CD8-positive, alpha-beta memory T cell (primary cell): ENCODE measurements at regions of chr13 and their contacts with region 1.

Region 1: GRCh38 chr13:30676672-30677071 is 58.7 kb upstream of the ALOX5AP start:
- DNase-seq: no peak
- H3K4me3 ChIP-seq: no peak overlapping the region
- H3K4me3 Mint-ChIP-seq: no peak overlapping the region
- H3K27ac ChIP-seq: no peak overlapping the region
- H3K27ac Mint-ChIP-seq: peak overlapping the region in 2 of 8 donors; percentile 27 to 82
- H3K4me1 ChIP-seq: peaks cover 6% of the 10 kb centered on the region
- H3K4me1 Mint-ChIP-seq: peaks cover 22 to 32% (median 29%) of the 10 kb centered on the region in 3 donors
- H3K27me3 ChIP-seq: no peaks in the 10 kb centered on the region
- H3K27me3 Mint-ChIP-seq: peaks cover 0 to 6% of the 10 kb centered on the region in 2 donors

Region 2: DNA sequence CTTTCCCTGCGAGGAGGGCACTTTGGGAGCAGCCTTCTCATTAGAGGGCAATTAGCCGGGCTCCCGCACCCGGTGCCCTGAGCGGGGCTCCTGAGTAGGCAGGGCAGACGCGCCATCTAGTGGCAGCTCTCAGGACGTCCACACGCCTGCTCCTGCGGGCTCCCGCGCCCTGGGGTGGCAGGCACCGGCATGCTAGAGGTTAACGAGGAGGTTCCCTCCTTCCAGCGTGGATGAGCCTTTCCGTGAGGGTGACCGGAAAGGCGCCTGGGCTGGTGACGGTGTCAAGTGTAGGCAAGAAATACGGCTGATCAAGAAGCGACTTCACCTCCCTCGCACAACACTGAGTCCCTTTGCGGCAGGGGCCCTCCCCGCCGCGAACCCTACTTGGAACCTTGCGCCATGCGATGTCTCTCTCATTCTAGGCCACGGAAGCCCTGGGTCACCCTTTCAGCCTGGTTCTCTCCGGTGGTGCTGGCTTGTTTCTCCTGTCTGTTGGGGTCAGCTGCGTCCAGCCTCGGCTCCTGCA is 126.3 kb after region 1 on chr13:
- CTCF ChIA-PET with region 1: interaction called, 17 read pairs
- POLR2A ChIA-PET with region 1: no interaction called
- DNase-seq: peak; percentile 67 to 83 (median 69)
- H3K4me3 ChIP-seq: peak overlapping the region; percentile 35
- H3K4me3 Mint-ChIP-seq: peak overlapping the region; percentile 14 to 75 (median 65)
- H3K27ac ChIP-seq: no peak overlapping the region
- H3K27ac Mint-ChIP-seq: peak overlapping the region in 5 of 8 donors; percentile 23 to 87 (median 54)
- H3K4me1 ChIP-seq: peaks cover 8% of the 10 kb centered on the region
- H3K4me1 Mint-ChIP-seq: peaks cover 8 to 20% (median 13%) of the 10 kb centered on the region in 3 donors
- H3K27me3 ChIP-seq: no peaks in the 10 kb centered on the region
- H3K27me3 Mint-ChIP-seq: peaks cover 0 to 4% of the 10 kb centered on the region in 2 donors

Region 3: DNA sequence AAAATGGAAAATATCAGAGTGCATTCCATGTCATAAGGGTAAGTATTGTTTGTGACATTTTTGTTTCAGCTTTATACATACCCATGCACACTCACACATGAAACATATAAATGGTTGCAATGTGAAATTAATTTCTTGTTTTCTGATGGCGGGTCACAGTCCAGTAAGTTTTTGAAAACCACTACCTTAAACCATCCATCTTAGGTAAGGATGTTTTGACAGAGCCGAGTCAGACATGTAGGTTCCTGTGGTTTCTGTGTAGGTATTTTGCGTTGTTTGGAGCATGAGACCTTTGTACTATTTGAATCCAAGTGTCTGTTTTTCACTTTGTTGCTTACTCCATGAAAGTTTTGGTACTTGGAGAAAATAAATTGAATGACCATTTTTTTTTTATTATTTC is 644.8 kb after region 1 on chr13:
- CTCF ChIA-PET with region 1: no interaction called
- POLR2A ChIA-PET with region 1: no interaction called
- DNase-seq: no peak
- H3K4me3 ChIP-seq: no peak overlapping the region
- H3K4me3 Mint-ChIP-seq: no peak overlapping the region
- H3K27ac ChIP-seq: no peak overlapping the region
- H3K27ac Mint-ChIP-seq: no peak overlapping the region
- H3K4me1 ChIP-seq: no peaks in the 10 kb centered on the region
- H3K4me1 Mint-ChIP-seq: no peaks in the 10 kb centered on the region
- H3K27me3 ChIP-seq: no peaks in the 10 kb centered on the region
- H3K27me3 Mint-ChIP-seq: no peaks in the 10 kb centered on the region